ENCODE measurements at regions of chr5 and their contacts with region 1.

Region 1: DNA sequence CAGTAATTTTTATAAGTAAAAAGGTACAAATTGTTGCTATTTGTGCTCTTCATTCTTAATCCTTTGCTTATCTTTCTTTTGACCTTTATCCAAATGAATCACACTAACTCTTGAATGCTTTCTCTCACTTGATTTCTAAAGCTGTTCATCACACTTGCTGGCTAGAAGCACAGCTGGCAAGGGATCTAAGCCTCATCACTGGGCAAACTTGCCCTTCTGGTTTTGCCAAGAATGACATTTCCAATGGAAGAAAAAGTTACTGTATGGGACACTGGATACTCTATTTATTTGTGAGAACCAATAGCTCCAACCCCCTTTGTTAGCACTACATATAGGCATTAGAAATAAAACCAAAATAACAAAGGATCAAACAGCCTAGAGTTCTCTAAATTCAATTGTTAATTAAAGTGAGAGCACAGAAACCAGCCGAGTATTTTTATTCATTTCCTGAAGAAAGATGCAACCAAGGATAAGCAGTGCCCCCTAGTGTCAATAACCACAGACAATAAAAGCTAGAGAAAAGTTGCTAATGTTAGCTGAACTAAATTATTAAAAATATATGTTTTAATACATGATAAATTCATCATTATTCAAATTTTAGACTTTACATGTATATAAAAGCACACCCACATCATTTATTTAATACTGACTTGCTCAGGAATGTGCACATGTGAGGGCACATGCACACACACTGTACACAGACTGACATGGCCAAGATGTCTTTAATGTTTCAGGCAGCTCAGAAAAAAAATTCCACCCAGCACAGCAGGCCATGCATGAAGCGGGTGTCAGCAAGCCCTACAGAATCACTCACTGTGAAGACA is 59.8 kb upstream of the POU5F2 start:
- DNase-seq: peak in 4 of 14 experiments; percentile 20 to 64 (median 59)
- ATAC-seq: no peak
- H3K4me3 ChIP-seq: no peak overlapping the region
- H3K4me3 Mint-ChIP-seq: no peak overlapping the region
- H3K27ac ChIP-seq: no peak overlapping the region
- H3K27ac Mint-ChIP-seq: no peak overlapping the region
- H3K4me1 ChIP-seq: no peaks in the 10 kb centered on the region
- H3K4me1 Mint-ChIP-seq: no peaks in the 10 kb centered on the region
- H3K27me3 ChIP-seq: no peaks in the 10 kb centered on the region
- H3K27me3 Mint-ChIP-seq: no peaks in the 10 kb centered on the region
- CTCF ChIP-seq: peak; percentile 70

Region 2: DNA sequence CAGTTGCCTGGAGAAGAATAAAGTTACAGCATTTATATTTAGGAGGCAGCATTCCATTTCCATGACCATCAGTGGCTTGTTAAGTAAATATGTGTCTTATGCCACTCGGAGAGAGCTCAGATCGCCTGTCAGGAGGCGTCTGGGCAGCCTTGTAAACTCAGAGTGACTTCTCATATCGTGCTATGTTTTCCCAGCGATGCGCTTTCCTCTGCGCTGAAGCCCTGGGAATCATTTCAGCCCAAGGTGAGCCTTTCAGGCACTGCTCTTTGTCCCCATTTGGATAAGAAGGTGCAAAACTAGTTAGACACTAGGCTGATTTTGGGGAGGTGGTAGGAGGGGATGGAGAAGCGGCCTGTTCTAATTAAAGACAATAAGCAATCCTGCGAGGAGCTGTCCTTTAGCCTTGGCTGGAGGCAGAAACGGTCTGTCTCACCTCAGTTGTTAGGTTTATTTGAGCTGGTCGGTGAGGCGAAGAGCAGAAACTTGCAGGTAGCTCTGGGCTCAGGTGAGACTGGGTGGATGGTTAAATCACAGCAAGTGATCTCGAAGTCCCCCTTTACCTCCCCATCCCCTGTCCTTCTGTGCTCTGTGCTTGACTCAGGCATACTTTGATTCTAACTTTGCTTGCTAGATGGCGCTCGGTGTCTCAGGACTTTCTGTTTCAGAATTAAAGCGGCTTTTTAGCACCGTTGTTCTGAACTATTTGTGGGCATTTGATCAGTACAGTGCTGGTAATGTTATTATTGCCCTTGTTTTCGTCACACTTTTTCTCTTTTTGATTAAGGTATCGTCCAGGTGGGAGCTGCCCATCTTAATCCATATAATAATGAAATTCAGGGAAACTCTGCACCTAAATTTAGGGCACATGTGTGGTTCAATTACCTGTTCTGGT is 193.6 kb before region 1 on chr5:
- CTCF ChIA-PET with region 1: interaction called, 11 read pairs
- POLR2A ChIA-PET with region 1: no interaction called
- intact Hi-C with region 1: loop called in 1 of 2 experiments (anchors 2 kb)
- DNase-seq: peak in 4 of 14 experiments; percentile 32 to 71 (median 62)
- ATAC-seq: peak; percentile 76
- H3K4me3 ChIP-seq: no peak overlapping the region
- H3K4me3 Mint-ChIP-seq: no peak overlapping the region
- H3K27ac ChIP-seq: no peak overlapping the region
- H3K27ac Mint-ChIP-seq: no peak overlapping the region
- H3K4me1 ChIP-seq: peaks cover 18% of the 10 kb centered on the region
- H3K4me1 Mint-ChIP-seq: peaks cover 26% of the 10 kb centered on the region
- H3K27me3 ChIP-seq: peaks cover 68 to 99% of the 10 kb centered on the region in 2 experiments
- H3K27me3 Mint-ChIP-seq: peaks cover 83% of the 10 kb centered on the region
- CTCF ChIP-seq: peak; percentile 48

Region 3: GRCh38 chr5:94153736-94154450 is 352.7 kb after region 1 on chr5:
- CTCF ChIA-PET with region 1: no interaction called
- POLR2A ChIA-PET with region 1: no interaction called
- intact Hi-C with region 1: no loop called
- DNase-seq: no peak
- ATAC-seq: no peak
- H3K4me3 ChIP-seq: no peak overlapping the region
- H3K4me3 Mint-ChIP-seq: no peak overlapping the region
- H3K27ac ChIP-seq: no peak overlapping the region
- H3K27ac Mint-ChIP-seq: no peak overlapping the region
- H3K4me1 ChIP-seq: no peaks in the 10 kb centered on the region
- H3K4me1 Mint-ChIP-seq: no peaks in the 10 kb centered on the region
- H3K27me3 ChIP-seq: no peaks in the 10 kb centered on the region
- H3K27me3 Mint-ChIP-seq: no peaks in the 10 kb centered on the region
- CTCF ChIP-seq: no peak

Measured in CD4-positive, alpha-beta T cell (primary cell).